Cardiac septum (tissue), 1 donor: ENCODE measurements at regions of chr16 and their contacts with region 1.

Region 1: GRCh38 chr16:1863681-1864460 is 8.1 kb downstream of the MEIOB start:
- DNase-seq: no peak

Region 2: GRCh38 chr16:1929578-1930337 is 65.9 kb after region 1 on chr16:
- intact Hi-C with region 1: loop called (anchors 2 kb)
- DNase-seq: peak; percentile 96